Aorta (tissue), 5 donors: ENCODE measurements at regions of chr17 and their contacts with region 1.

Region 1: GRCh38 chr17:13140750-13141149 is 122.9 kb upstream of the ELAC2 start:
- DNase-seq: no peak
- ATAC-seq: no peak
- H3K4me3 ChIP-seq: no peak overlapping the region
- H3K27ac ChIP-seq: no peak overlapping the region
- H3K4me1 ChIP-seq: no peaks in the 10 kb centered on the region
- H3K27me3 ChIP-seq: peaks cover 0 to 2% of the 10 kb centered on the region in 2 donors

Region 2: DNA sequence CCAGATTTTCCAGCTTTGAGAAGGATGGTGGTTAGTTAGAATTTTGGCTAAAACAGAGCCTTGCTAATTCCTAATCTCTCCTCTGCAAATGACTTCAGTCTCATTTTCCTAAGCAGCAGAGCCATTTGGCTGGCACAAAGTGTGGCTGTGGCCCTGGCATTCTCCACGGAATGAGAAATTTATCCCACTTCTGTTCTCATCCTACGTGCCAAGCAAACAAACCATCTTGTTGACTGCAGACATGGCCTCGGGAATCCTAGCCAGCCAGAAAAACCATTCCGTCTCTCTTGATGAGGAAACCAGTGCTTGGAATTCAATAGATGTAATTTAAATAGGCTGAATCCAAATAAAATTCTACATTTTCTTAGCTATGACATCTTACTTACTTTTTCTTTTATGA is 88.8 kb before region 1 on chr17:
- intact Hi-C with region 1: loop called in 1 of 2 experiments (anchors 10 kb)
- DNase-seq: no peak
- ATAC-seq: no peak
- H3K4me3 ChIP-seq: no peak overlapping the region
- H3K27ac ChIP-seq: no peak overlapping the region
- H3K4me1 ChIP-seq: no peaks in the 10 kb centered on the region
- H3K27me3 ChIP-seq: no peaks in the 10 kb centered on the region

Region 3: DNA sequence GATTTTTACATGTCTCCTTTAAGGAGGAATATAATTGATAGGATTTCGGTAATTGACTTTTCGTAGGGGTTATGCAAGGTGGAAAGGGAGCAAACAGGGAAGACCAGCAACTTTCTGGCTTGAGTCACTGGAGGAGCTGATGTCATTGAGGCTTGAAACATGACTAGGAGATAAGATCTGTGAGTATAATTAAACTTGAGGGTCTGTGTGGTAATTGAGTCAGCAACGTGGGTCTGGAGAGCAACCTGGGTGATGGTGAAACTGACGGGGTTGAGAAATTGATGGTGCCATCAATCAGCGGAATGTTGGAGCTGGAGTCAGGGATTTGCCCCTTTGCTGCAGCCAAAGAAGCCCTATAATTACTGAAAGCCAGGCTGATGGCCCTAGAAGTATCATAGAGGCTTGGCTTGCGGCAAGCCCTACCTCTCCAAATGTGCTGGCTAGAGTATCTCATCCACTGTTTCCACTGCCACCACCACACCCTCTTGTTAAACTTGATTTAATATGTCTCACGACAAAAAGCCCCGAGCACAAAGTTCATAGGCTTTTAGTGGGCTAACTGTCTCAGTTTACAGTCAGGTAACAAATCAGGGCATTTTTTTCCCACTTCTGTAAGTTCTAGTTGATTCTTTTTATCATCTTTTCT is 63.9 kb after region 1 on chr17:
- intact Hi-C with region 1: loop called in 1 of 2 experiments (anchors 10 kb)
- DNase-seq: no peak
- ATAC-seq: no peak
- H3K4me3 ChIP-seq: no peak overlapping the region
- H3K27ac ChIP-seq: no peak overlapping the region
- H3K4me1 ChIP-seq: no peaks in the 10 kb centered on the region
- H3K27me3 ChIP-seq: peaks cover 0 to 3% of the 10 kb centered on the region in 2 donors

Region 4: DNA sequence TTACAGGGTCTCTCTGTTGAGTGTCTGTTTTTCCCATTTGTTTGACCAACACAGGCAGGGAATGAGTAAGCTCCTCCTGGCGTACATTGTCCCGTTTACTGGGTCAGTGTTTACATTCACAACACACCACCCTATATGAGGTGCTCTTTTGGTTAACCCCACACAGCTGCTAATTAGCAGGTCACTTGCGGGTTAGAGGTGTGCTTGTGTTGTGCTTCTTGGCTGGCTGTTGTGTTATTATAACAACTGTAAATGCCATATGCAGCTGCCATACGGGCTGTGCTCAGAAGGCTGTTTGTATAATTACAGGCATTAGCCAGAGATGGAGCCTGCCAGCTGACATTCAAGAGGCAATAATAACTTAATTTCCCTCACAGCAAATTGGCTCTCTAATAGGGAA is 82.2 kb after region 1 on chr17:
- intact Hi-C with region 1: no loop called
- DNase-seq: no peak
- ATAC-seq: no peak
- H3K4me3 ChIP-seq: no peak overlapping the region
- H3K27ac ChIP-seq: no peak overlapping the region
- H3K4me1 ChIP-seq: no peaks in the 10 kb centered on the region
- H3K27me3 ChIP-seq: no peaks in the 10 kb centered on the region

Region 5: DNA sequence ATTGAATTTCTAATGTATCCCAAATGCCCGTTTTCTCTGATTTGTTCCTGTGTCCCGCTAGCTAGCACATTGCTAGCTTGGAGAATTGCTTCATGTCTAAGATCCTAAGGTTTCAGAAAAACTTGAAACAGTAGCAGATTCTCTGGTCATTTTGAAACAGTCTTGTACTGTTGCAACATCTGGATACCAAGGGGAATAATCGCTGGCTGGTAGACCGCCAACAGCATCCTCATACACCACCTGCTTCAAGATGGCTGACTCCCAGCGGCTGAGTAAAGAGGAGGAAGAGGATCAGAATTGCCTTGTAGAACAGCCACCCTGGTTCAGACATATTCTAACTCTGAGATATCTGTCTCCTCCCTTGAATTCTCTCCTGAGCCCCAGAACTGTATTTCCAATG is 103.8 kb after region 1 on chr17:
- intact Hi-C with region 1: no loop called
- DNase-seq: no peak
- ATAC-seq: no peak
- H3K4me3 ChIP-seq: no peak overlapping the region
- H3K27ac ChIP-seq: no peak overlapping the region
- H3K4me1 ChIP-seq: peaks cover 0 to 4% of the 10 kb centered on the region in 2 donors
- H3K27me3 ChIP-seq: no peaks in the 10 kb centered on the region